ENCODE measurements at regions of chr13 and their contacts with region 1.

Region 1: DNA sequence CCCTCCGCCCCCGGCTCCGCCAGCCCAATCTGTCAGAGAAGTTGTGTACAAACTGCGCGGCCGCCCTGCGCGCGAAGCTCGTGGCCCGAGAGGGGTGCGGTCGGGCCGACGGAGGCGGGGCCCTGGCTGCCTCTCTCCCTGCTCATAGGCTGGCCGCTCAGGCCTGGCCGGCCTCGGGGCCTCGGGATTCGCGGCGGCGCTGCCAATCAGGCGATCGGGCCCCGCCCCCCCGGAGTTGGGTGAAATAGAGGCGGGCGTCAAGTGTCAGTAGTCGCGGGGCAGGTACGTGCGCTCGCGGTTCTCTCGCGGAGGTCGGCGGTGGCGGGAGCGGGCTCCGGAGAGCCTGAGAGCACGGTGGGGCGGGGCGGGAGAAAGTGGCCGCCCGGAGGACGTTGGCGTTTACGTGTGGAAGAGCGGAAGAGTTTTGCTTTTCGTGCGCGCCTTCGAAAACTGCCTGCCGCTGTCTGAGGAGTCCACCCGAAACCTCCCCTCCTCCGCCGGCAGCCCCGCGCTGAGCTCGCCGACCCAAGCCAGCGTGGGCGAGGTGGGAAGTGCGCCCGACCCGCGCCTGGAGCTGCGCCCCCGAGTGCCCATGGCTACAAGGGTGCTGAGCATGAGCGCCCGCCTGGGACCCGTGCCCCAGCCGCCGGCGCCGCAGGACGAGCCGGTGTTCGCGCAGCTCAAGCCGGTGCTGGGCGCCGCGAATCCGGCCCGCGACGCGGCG is at the start of gene KLF5:
- DNase-seq: peak; percentile 95
- H3K4me3 Mint-ChIP-seq: peak within 1 kb of the TSS; percentile 87
- H3K27ac Mint-ChIP-seq: no peak within 1 kb of the TSS
- H3K4me1 Mint-ChIP-seq: peaks cover 17% of the 10 kb centered on the region
- H3K27me3 Mint-ChIP-seq: peaks cover 22% of the 10 kb centered on the region
- total RNA-seq, gene KLF5: 1.3 to 1.9 TPM

Region 2: GRCh38 chr13:72781451-72782439 is 277.2 kb before region 1 on chr13 and contains the starts of genes DIS3 and PIBF1:
- CTCF ChIA-PET with region 1: no interaction called
- intact Hi-C with region 1: loop called (anchors 1 kb)
- DNase-seq: peak; percentile 99
- H3K4me3 Mint-ChIP-seq: peak within 1 kb of the TSS; percentile 99
- H3K27ac Mint-ChIP-seq: peak within 1 kb of the TSS; percentile 99
- H3K4me1 Mint-ChIP-seq: peaks cover 55% of the 10 kb centered on the region
- H3K27me3 Mint-ChIP-seq: no peaks in the 10 kb centered on the region
- total RNA-seq, gene DIS3: 47.7 to 48.9 TPM
- total RNA-seq, gene PIBF1: 19.5 to 23.5 TPM

Region 3: DNA sequence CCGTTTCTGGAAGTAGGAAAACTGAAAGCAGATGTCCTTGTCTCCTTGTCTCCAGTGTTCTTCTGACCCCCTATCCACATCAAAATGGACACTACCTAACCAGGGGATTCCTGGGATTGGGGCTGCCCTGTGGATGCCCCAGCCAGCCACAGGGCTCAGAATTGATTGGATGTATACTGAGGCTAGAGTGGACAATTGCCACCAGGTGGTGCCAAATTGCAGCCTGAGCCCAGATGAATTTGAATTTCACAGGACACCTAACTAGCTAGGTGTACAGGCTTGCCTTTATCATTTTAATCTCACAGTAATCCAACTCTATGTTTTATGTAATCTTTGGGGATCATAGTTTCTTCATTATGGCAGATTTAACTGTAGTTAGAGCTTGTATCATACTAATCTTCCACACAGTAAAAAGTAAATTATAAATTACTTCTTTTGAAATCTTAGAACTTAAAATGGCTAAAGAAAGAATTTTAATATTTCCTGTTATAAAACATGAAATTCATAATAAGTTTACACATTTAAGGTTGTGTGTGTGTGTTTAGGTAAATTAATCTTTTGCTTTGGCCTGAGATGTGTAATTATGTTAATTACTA is 219.0 kb before region 1 on chr13:
- CTCF ChIA-PET with region 1: no interaction called
- intact Hi-C with region 1: loop called (anchors 1 kb)
- DNase-seq: peak; percentile 63
- H3K4me3 Mint-ChIP-seq: no peak overlapping the region
- H3K27ac Mint-ChIP-seq: no peak overlapping the region
- H3K4me1 Mint-ChIP-seq: no peaks in the 10 kb centered on the region
- H3K27me3 Mint-ChIP-seq: no peaks in the 10 kb centered on the region

Region 4: GRCh38 chr13:73228546-73228945 is 169.6 kb after region 1 on chr13:
- CTCF ChIA-PET with region 1: no interaction called
- intact Hi-C with region 1: loop called (anchors 1 kb)
- DNase-seq: peak; percentile 37
- H3K4me3 Mint-ChIP-seq: no peak overlapping the region
- H3K27ac Mint-ChIP-seq: peak overlapping the region; percentile 36
- H3K4me1 Mint-ChIP-seq: peaks cover 42% of the 10 kb centered on the region
- H3K27me3 Mint-ChIP-seq: no peaks in the 10 kb centered on the region

Region 5: DNA sequence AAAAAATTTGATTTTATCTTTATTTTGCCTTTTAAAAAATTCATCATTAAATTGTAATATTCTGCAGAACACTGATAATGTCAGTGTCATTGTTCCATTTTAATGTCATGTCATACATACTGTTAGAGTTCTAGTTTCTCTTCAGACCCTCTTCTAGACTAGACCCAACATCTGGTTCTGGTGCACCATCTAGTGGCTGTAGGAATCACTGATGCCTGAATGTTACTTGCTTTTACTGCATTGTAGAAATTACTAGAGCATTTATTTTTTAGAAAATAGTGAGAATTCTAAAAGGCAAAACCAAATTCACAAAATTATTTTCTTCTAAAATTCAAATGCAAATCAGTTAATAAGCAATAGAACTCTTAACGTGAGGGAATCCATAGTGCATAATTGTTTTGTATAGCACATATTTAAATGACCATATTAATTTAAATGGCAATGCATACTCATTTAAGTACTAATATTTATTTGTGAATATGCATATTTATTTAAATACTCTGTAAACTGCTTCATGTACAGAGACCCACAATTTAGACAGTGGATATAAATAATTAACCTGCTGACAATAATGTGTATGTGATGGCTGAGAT is 649.6 kb after region 1 on chr13:
- CTCF ChIA-PET with region 1: interaction called, 3 read pairs
- intact Hi-C with region 1: loop called (anchors 1 kb)
- DNase-seq: peak; percentile 73
- H3K4me3 Mint-ChIP-seq: no peak overlapping the region
- H3K27ac Mint-ChIP-seq: no peak overlapping the region
- H3K4me1 Mint-ChIP-seq: peaks cover 15% of the 10 kb centered on the region
- H3K27me3 Mint-ChIP-seq: no peaks in the 10 kb centered on the region